H1 (cell line): ENCODE measurements at regions of chr20 and their contacts with region 1.

Region 1: GRCh38 chr20:577167-577791 is 32.8 kb downstream of the TCF15 start:
- DNase-seq: no peak
- H3K4me3 ChIP-seq: no peak overlapping the region
- H3K27ac ChIP-seq: no peak overlapping the region
- H3K4me1 ChIP-seq: peaks cover 8 to 28% (median 14%) of the 10 kb centered on the region in 4 experiments
- H3K27me3 ChIP-seq: peaks cover 0 to 11% (median 3%) of the 10 kb centered on the region in 4 experiments; a peak in 5 of 7 replicates
- CTCF ChIP-seq: peak; percentile 33 to 74 (median 40); a peak in 3 of 4 replicates
- EP300 ChIP-seq: no peak
- POLR2A ChIP-seq: no peak
- RAD21 ChIP-seq: peak in 1 of 2 experiments; percentile 41; a peak in 1 of 4 replicates

Region 2: DNA sequence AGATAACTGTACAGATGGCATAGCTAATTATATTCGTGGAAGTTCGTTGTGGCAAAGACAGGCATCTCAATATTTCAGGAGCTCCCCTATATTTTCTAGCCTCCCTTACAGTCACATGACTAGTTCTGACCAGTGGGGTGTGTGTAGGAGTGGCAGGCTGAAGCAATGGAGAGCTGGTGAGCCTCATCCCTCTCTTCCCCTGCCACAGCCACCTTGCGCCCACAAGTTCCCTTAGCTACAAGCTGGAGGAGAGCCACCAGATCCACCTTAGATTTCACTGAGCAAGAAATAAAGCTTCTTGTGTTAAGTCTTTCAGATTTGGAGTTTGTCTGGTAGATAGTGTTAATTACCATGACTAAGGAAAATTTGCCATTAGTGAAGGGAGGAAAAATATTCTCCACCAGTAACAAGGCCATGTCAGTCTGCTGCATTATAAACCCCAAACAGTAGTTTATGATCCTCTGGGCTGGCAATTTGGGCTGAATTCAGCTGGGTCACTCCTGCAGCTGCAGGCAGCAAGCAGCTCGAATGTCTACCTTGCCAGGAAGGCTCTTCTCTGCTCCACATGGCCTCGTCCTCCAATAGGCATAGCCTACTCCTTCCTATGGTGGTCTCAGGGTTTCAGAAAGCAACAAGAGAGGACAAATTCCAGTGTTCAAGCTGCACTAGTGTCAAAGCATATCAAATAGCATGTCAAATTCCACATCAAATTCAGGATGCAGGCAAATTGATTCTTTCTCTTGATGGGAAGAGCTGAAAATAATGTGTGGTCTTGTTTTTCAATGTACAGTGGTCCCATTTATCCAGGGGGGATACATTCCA is 176.6 kb before region 1 on chr20:
- CTCF ChIA-PET with region 1: no interaction called
- POLR2A ChIA-PET with region 1: no interaction called
- DNase-seq: no peak
- H3K4me3 ChIP-seq: no peak overlapping the region
- H3K27ac ChIP-seq: no peak overlapping the region
- H3K4me1 ChIP-seq: peaks cover 3 to 7% (median 4%) of the 10 kb centered on the region in 4 experiments; a peak in 4 of 7 replicates
- H3K27me3 ChIP-seq: no peaks in the 10 kb centered on the region
- CTCF ChIP-seq: no peak
- EP300 ChIP-seq: no peak
- POLR2A ChIP-seq: no peak
- RAD21 ChIP-seq: no peak

Region 3: DNA sequence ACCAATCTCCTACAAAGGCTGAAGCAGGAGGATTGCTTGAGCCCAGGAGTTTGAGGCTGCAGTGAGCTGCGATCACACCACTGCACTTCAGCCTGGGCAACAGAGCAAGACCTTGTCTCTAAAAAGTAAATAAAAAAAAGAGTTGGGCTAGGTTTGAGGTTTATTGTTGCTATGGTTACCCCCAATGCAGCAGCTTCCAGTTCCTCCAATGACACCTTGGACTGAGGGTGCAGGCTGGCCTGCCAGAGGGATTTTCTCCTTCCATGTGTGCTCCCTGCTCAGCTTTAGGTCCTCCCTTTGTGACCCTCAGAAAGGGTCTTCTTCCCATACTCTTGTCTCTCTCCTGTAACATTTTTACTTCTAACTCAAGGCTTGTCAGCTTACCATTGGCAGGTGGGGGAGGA is 104.4 kb before region 1 on chr20:
- CTCF ChIA-PET with region 1: no interaction called
- POLR2A ChIA-PET with region 1: no interaction called
- DNase-seq: no peak
- H3K4me3 ChIP-seq: no peak overlapping the region
- H3K27ac ChIP-seq: no peak overlapping the region
- H3K4me1 ChIP-seq: no peaks in the 10 kb centered on the region
- H3K27me3 ChIP-seq: no peaks in the 10 kb centered on the region
- CTCF ChIP-seq: no peak
- EP300 ChIP-seq: no peak
- POLR2A ChIP-seq: no peak; a peak in 1 of 3 replicates
- RAD21 ChIP-seq: no peak

Region 4: GRCh38 chr20:535958-536357 is 41.3 kb before region 1 on chr20:
- CTCF ChIA-PET with region 1: no interaction called
- POLR2A ChIA-PET with region 1: no interaction called
- DNase-seq: no peak
- H3K4me3 ChIP-seq: no peak overlapping the region
- H3K27ac ChIP-seq: no peak overlapping the region
- H3K4me1 ChIP-seq: peaks cover 2 to 13% (median 5%) of the 10 kb centered on the region in 4 experiments; a peak in 6 of 7 replicates
- H3K27me3 ChIP-seq: no peaks in the 10 kb centered on the region
- CTCF ChIP-seq: no peak
- EP300 ChIP-seq: no peak
- POLR2A ChIP-seq: no peak
- RAD21 ChIP-seq: no peak

Region 5: DNA sequence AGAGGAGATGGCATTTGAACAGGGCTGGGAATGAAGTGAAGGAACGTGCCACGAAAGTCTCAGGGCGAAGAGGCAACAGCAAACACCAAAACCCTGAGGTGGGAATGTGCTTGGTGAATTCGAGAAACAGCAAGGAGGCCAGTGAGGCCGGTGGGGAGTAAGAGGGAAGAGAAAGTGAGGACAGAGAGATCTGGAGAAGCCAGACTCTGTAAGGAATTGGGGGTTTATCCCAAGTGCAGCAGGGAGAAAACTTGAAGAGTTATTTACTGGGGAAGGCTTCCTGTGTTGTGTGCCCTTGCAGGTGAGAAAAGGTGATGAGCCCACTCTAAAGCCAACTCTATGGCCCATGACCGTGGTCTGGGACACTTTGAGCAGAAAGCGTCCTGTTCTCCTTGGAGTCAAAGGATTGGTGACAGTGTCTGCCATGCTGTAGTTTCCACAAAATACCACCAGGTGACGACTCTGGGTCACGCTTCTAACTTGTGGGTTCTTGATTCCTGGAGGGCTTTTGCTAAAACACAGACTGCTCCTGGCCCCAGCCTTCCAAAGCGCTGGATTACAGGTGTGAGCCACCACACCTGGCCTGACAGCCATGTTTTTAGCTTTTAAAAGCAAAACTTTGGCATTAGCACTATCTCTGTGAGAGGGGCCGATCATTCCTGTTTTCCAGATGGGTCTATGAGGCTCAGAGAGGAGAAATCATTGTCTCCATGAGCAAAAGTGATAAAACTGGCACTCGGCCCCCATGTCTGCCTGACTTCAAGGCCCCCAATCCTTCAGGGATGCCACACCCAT is 15.6 kb before region 1 on chr20:
- CTCF ChIA-PET with region 1: interaction called, 73 read pairs
- POLR2A ChIA-PET with region 1: interaction called, 18 read pairs
- DNase-seq: peak in 1 of 2 experiments; percentile 83
- H3K4me3 ChIP-seq: no peak overlapping the region
- H3K27ac ChIP-seq: no peak overlapping the region
- H3K4me1 ChIP-seq: no peaks in the 10 kb centered on the region
- H3K27me3 ChIP-seq: no peaks in the 10 kb centered on the region
- CTCF ChIP-seq: peak; percentile 74 to 99 (median 95)
- EP300 ChIP-seq: no peak
- POLR2A ChIP-seq: no peak
- RAD21 ChIP-seq: peak; percentile 98

Region 6: GRCh38 chr20:602111-602970 is 25.1 kb after region 1 on chr20:
- CTCF ChIA-PET with region 1: interaction called, 22 read pairs
- POLR2A ChIA-PET with region 1: interaction called, 3 read pairs
- DNase-seq: no peak
- H3K4me3 ChIP-seq: no peak overlapping the region
- H3K27ac ChIP-seq: no peak overlapping the region
- H3K4me1 ChIP-seq: no peaks in the 10 kb centered on the region
- H3K27me3 ChIP-seq: no peaks in the 10 kb centered on the region
- CTCF ChIP-seq: no peak
- EP300 ChIP-seq: no peak
- POLR2A ChIP-seq: no peak
- RAD21 ChIP-seq: no peak

Region 7: DNA sequence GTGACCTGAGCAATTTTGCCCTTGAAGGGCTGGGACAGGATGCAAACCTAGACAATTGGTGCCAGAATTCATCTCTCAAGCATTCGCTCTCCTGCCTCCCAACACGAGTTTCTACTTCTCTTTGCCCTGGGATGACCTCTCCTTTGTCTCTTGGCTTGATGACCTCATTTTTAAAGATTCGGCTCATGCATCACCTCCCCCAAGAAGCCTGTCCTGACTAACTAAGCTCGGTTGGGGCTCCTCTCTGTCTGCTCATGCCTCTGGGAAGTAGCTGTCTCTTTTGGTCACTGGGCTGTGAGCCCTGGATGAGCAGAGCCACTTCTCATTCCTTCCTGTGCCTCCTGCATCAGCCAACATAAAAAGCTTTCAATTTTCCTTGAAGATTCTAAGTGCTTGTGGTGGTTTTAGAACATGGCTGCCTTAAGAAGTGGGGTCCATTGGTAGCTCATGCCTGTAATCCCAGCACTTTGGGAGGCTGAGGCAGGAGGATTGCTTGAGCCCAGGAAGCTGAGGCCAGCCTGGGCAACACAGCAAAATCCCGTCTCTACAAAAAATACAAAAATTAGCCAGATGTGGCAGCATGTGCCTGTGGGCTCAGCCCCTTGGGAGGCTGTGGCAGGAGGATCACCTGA is 44.0 kb after region 1 on chr20:
- CTCF ChIA-PET with region 1: interaction called, 10 read pairs
- POLR2A ChIA-PET with region 1: no interaction called
- DNase-seq: no peak
- H3K4me3 ChIP-seq: no peak overlapping the region
- H3K27ac ChIP-seq: no peak overlapping the region
- H3K4me1 ChIP-seq: 0 out of 7 replicates have a peak, but pooled peaks cover 0 to 5% (median 2%) of the 10 kb centered on the region in 4 experiments
- H3K27me3 ChIP-seq: no peaks in the 10 kb centered on the region
- CTCF ChIP-seq: no peak
- EP300 ChIP-seq: no peak
- POLR2A ChIP-seq: no peak
- RAD21 ChIP-seq: no peak